Activated B cell treated with CpG ODN at 0.5 μM for 24 hours (primary cell): ENCODE measurements at regions of chr2 and their contacts with region 1.

Region 1: GRCh38 chr2:171210864-171211431 is 50.3 kb upstream of the TLK1 start:
- DNase-seq: no peak
- ATAC-seq: peak; percentile 72
- H3K4me3 Mint-ChIP-seq: peak overlapping the region; percentile 65
- H3K27ac Mint-ChIP-seq: peak overlapping the region; percentile 81
- H3K4me1 Mint-ChIP-seq: peaks cover 16% of the 10 kb centered on the region
- H3K27me3 Mint-ChIP-seq: no peaks in the 10 kb centered on the region
- CTCF ChIP-seq: no peak

Region 2: DNA sequence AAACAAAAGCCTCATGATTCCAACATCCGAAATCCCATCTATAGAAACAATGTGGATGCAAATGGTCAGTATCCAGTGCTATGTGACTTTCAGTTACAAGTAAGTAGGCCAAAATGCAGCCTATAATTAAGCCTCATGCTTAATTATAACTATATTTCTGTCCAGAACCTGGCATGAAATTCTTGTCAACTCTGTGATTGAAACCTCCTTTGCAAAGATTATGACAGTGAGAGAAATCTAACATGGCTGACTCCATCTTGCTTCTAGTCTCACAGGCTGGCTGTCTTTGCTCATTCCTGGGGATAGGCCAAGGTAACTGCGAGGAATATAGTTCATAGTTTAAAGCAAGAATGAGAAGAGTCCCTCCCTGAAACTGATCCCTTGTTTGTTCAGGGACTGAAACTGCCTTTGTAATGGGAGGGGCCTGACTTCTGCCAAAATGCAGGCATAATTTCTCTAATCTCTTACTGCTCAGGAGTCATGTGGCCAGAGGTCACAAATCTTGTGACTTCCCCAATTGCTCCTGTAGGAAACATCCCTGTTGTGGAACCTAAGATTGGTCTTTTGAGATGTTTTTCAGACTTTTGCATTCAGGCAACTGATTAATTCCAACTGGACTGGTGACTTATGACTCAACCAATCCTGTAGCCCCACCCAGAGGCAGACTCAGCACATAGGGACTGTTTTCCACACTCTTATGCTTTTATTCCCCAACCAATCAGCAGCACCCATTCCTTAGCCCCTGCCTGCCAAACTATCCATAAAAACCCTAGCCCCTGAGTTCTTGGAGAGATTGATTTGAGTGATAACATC is 34.2 kb after region 1 on chr2:
- CTCF ChIA-PET with region 1: no interaction called
- POLR2A ChIA-PET with region 1: no interaction called
- intact Hi-C with region 1: loop called (anchors 5 kb)
- DNase-seq: no peak
- ATAC-seq: no peak
- H3K4me3 Mint-ChIP-seq: no peak overlapping the region
- H3K27ac Mint-ChIP-seq: no peak overlapping the region
- H3K4me1 Mint-ChIP-seq: peaks cover 15% of the 10 kb centered on the region
- H3K27me3 Mint-ChIP-seq: no peaks in the 10 kb centered on the region
- CTCF ChIP-seq: no peak